ENCODE measurements at regions of chr19 and their contacts with region 1.

Region 1: GRCh38 chr19:12757544-12758274 is 6.1 kb downstream of the BEST2 start:
- DNase-seq: peak; percentile 83 to 95
- H3K4me3 ChIP-seq: peak overlapping the region; percentile 12 to 59 (median 27); a peak in 6 of 8 replicates
- H3K27ac ChIP-seq: no peak overlapping the region
- H3K4me1 ChIP-seq: peaks cover 0 to 6% (median 2%) of the 10 kb centered on the region in 4 experiments; a peak in 3 of 7 replicates
- H3K27me3 ChIP-seq: no peaks in the 10 kb centered on the region; a peak in 1 of 7 replicates
- CTCF ChIP-seq: peak; percentile 90 to 94 (median 91)
- EP300 ChIP-seq: no peak; a peak in 1 of 3 replicates
- POLR2A ChIP-seq: peak in 1 of 2 experiments; percentile 59; a peak in 1 of 3 replicates
- RAD21 ChIP-seq: peak; percentile 52 to 63

Region 2: GRCh38 chr19:12666265-12667048 is 91.3 kb before region 1 on chr19 and contains the starts of genes MAN2B1 and WDR83:
- CTCF ChIA-PET with region 1: no interaction called
- POLR2A ChIA-PET with region 1: no interaction called
- DNase-seq: peak in 1 of 2 experiments; percentile 85
- H3K4me3 ChIP-seq: peak within 1 kb of the TSS; percentile 88 to 97 (median 92)
- H3K27ac ChIP-seq: peak within 1 kb of the TSS; percentile 41; the same call in 1 of the 2 replicates
- H3K4me1 ChIP-seq: peaks cover 3 to 22% (median 7%) of the 10 kb centered on the region in 4 experiments
- H3K27me3 ChIP-seq: no peaks in the 10 kb centered on the region; a peak in 1 of 7 replicates
- CTCF ChIP-seq: no peak
- EP300 ChIP-seq: no peak
- POLR2A ChIP-seq: peak in 1 of 2 experiments; percentile 67; a peak in 2 of 3 replicates
- RAD21 ChIP-seq: no peak
- total RNA-seq, gene MAN2B1: 71.1 and 76.3 TPM in 2 replicates
- total RNA-seq, gene WDR83: 15.3 and 19.6 TPM in 2 replicates

Region 3: DNA sequence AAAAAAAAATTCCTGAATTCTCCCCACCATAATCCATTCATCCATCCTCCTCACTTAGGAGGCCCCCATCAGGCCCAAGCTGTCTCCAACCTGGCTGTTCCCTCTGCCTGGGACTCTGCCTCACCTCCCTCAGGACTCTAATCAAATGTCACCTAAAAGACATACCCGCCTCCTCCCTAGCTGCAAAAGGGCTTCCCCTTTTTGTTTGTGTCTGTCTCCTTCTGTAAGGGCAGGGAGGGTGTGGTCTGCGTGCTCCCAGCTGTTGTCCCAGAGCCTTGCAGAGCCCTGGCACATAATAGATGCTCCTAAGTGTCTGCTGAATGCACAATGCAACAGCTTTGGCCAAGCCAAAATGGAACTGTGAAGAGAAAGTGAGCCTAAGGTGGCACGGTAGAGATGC is 27.7 kb before region 1 on chr19:
- CTCF ChIA-PET with region 1: interaction called, 87 read pairs
- POLR2A ChIA-PET with region 1: interaction called, 104 read pairs
- DNase-seq: no peak
- H3K4me3 ChIP-seq: no peak overlapping the region
- H3K27ac ChIP-seq: no peak overlapping the region
- H3K4me1 ChIP-seq: peaks cover 0 to 6% (median 4%) of the 10 kb centered on the region in 4 experiments; a peak in 5 of 7 replicates
- H3K27me3 ChIP-seq: no peaks in the 10 kb centered on the region
- CTCF ChIP-seq: no peak
- EP300 ChIP-seq: no peak
- POLR2A ChIP-seq: no peak
- RAD21 ChIP-seq: no peak

Region 4: GRCh38 chr19:12777217-12778016 is 19.7 kb after region 1 on chr19:
- CTCF ChIA-PET with region 1: interaction called, 137 read pairs
- POLR2A ChIA-PET with region 1: interaction called, 12 read pairs
- DNase-seq: peak in 1 of 2 experiments; percentile 95
- H3K4me3 ChIP-seq: peak overlapping the region; percentile 40 to 69 (median 62)
- H3K27ac ChIP-seq: no peak overlapping the region
- H3K4me1 ChIP-seq: peaks cover 0 to 22% (median 17%) of the 10 kb centered on the region in 4 experiments; a peak in 6 of 7 replicates
- H3K27me3 ChIP-seq: no peaks in the 10 kb centered on the region
- CTCF ChIP-seq: peak; percentile 81 to 92 (median 81)
- EP300 ChIP-seq: peak in 1 of 2 experiments; percentile 41; a peak in 1 of 3 replicates
- POLR2A ChIP-seq: no peak
- RAD21 ChIP-seq: peak; percentile 74 to 84

Region 5: GRCh38 chr19:12806239-12807081 is 48.8 kb after region 1 on chr19 and contains the start of gene RNASEH2A:
- CTCF ChIA-PET with region 1: interaction called, 288 read pairs
- POLR2A ChIA-PET with region 1: interaction called, 25 read pairs
- DNase-seq: peak in 1 of 2 experiments; percentile 91
- H3K4me3 ChIP-seq: peak within 1 kb of the TSS; percentile 78 to 87 (median 80)
- H3K27ac ChIP-seq: peak within 1 kb of the TSS; percentile 33; the same call in 1 of the 2 replicates
- H3K4me1 ChIP-seq: peaks cover 0 to 14% (median 9%) of the 10 kb centered on the region in 4 experiments; a peak in 6 of 7 replicates
- H3K27me3 ChIP-seq: peaks cover 0 to 4% (median under 1%) of the 10 kb centered on the region in 4 experiments; a peak in 2 of 7 replicates
- CTCF ChIP-seq: no peak
- EP300 ChIP-seq: no peak
- POLR2A ChIP-seq: peak in 1 of 2 experiments; percentile 83; a peak in 1 of 3 replicates
- RAD21 ChIP-seq: no peak
- total RNA-seq, gene RNASEH2A: 67.5 and 67.9 TPM in 2 replicates